ENCODE measurements at regions of chr4 and their contacts with region 1.

Region 1: GRCh38 chr4:186889876-186890643 is 166.4 kb upstream of the FAT1 start:
- DNase-seq: no peak
- H3K4me3 ChIP-seq: no peak overlapping the region
- H3K27ac ChIP-seq: no peak overlapping the region
- H3K4me1 ChIP-seq: no peaks in the 10 kb centered on the region
- H3K27me3 ChIP-seq: no peaks in the 10 kb centered on the region
- CTCF ChIP-seq: no peak
- POLR2A ChIP-seq: no peak

Region 2: GRCh38 chr4:188168726-188169373 is 1278.8 kb after region 1 on chr4:
- intact Hi-C with region 1: loop called (anchors 10 kb)
- DNase-seq: no peak
- H3K4me3 ChIP-seq: no peak overlapping the region
- H3K27ac ChIP-seq: no peak overlapping the region
- H3K4me1 ChIP-seq: no peaks in the 10 kb centered on the region
- H3K27me3 ChIP-seq: no peaks in the 10 kb centered on the region
- CTCF ChIP-seq: no peak
- POLR2A ChIP-seq: no peak